ENCODE measurements at regions of chr11 and their contacts with region 1.

Region 1: DNA sequence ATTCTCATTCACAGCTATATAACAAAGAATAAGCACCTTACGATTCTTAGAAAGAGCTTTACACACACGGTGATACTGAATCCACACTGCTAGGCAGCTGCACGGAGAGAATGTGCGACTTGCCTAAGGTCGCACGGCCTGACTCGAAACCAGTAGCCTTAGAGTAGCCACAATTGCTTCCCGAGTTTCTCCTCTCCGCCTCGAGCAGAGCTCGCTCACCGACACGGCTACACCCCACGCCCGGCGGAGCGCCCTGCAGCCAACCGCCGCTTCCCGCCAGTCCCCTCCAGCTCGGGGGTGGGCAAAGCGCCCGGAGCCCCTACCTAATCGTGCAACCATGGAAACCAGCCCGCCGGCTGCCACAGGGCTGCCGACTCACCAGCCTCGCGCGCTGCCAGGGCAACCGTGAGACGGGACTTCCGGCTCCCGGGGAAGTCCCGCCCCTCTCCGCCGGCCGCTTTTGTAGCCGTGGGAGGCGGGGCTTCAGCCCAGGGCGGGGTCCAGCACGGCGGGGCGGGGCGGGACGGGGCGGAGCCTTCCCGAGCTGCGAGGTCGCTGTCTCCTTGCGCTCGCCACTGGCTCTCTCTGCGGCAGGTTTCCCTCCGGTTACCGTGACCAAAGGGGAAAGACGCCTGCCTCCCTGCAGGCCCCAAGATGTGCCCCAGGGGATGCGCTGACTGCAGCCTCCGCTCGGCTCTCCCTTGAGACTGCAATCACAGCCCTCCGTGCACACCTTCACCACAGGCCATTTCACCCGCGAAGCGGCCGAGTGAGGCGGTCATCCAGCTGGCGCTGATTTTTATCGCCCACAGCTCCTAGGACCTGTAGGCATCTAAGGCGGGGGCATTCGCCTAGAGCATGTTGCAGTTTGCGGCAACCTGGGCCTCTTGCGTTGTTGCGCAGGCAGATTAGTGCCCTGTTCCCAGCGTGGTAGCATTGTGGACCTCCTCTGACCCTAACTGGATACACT is 1.1 kb downstream of the BSCL2 start:
- DNase-seq: peak; percentile 94 to 98 (median 96)
- ATAC-seq: peak; percentile 65 to 90 (median 86)
- H3K4me3 ChIP-seq: peak overlapping the region; percentile 63 to 89 (median 78)
- H3K27ac ChIP-seq: peak overlapping the region; percentile 71 to 95 (median 88)
- H3K4me1 ChIP-seq: peaks cover 0 to 61% (median 34%) of the 10 kb centered on the region in 12 donors
- H3K27me3 ChIP-seq: no peaks in the 10 kb centered on the region
- CTCF ChIP-seq: no peak
- POLR2A ChIP-seq: peak in 1 of 2 donors; percentile 60

Region 2: GRCh38 chr11:62665075-62665598 is 41.0 kb before region 1 on chr11 and contains the starts of genes C11orf98 and CSKMT:
- intact Hi-C with region 1: loop called in 2 of 10 experiments (anchors 5 kb)
- DNase-seq: peak; percentile 95 to 97 (median 95)
- ATAC-seq: peak; percentile 97 to 98 (median 98)
- H3K4me3 ChIP-seq: peak within 1 kb of the TSS; percentile 53 to 92 (median 83)
- H3K27ac ChIP-seq: peak within 1 kb of the TSS; percentile 30 to 98 (median 90)
- H3K4me1 ChIP-seq: peaks cover 5 to 45% (median 32%) of the 10 kb centered on the region in 12 donors
- H3K27me3 ChIP-seq: no peaks in the 10 kb centered on the region
- CTCF ChIP-seq: no peak
- POLR2A ChIP-seq: peak; percentile 91 to 97
- total RNA-seq, gene C11orf98: 24.0 to 56.2 (median 28.5) TPM
- total RNA-seq, gene CSKMT: 0.38 to 8.7 (median 4.2) TPM

Region 3: DNA sequence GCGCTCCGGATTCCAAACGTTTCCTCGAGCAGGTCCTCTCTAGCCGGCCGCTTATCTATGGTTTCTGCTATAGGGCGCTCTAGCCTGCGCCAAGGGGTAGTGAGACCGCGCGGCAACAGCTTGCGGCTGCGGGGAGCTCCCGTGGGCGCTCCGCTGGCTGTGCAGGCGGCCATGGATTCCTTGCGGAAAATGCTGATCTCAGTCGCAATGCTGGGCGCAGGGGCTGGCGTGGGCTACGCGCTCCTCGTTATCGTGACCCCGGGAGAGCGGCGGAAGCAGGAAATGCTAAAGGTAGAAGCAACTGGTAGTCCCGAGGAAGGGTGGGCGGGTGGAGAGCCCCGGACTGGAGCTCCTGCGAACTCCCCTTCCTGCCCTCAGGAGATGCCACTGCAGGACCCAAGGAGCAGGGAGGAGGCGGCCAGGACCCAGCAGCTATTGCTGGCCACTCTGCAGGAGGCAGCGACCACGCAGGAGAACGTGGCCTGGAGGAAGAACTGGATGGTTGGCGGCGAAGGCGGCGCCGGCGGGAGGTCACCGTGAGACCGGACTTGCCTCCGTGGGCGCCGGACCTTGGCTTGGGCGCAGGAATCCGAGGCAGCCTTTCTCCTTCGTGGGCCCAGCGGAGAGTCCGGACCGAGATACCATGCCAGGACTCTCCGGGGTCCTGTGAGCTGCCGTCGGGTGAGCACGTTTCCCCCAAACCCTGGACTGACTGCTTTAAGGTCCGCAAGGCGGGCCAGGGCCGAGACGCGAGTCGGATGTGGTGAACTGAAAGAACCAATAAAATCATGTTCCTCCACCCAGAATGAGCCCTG is 34.4 kb before region 1 on chr11 and contains the starts of genes LBHD1 and UQCC3:
- intact Hi-C with region 1: loop called in 2 of 10 experiments (anchors 5 kb)
- DNase-seq: peak; percentile 77 to 85 (median 83)
- ATAC-seq: peak; percentile 78 to 91 (median 86)
- H3K4me3 ChIP-seq: peak within 1 kb of the TSS; percentile 68 to 93 (median 76)
- H3K27ac ChIP-seq: peak within 1 kb of the TSS; percentile 82 to 97 (median 88)
- H3K4me1 ChIP-seq: peaks cover 0 to 54% (median 33%) of the 10 kb centered on the region in 12 donors
- H3K27me3 ChIP-seq: no peaks in the 10 kb centered on the region
- CTCF ChIP-seq: no peak
- POLR2A ChIP-seq: peak in 1 of 2 donors; percentile 53
- total RNA-seq, gene LBHD1: 1.8 to 6.3 (median 2.9) TPM
- total RNA-seq, gene UQCC3: 5.3 to 8.8 (median 5.9) TPM

Region 4: DNA sequence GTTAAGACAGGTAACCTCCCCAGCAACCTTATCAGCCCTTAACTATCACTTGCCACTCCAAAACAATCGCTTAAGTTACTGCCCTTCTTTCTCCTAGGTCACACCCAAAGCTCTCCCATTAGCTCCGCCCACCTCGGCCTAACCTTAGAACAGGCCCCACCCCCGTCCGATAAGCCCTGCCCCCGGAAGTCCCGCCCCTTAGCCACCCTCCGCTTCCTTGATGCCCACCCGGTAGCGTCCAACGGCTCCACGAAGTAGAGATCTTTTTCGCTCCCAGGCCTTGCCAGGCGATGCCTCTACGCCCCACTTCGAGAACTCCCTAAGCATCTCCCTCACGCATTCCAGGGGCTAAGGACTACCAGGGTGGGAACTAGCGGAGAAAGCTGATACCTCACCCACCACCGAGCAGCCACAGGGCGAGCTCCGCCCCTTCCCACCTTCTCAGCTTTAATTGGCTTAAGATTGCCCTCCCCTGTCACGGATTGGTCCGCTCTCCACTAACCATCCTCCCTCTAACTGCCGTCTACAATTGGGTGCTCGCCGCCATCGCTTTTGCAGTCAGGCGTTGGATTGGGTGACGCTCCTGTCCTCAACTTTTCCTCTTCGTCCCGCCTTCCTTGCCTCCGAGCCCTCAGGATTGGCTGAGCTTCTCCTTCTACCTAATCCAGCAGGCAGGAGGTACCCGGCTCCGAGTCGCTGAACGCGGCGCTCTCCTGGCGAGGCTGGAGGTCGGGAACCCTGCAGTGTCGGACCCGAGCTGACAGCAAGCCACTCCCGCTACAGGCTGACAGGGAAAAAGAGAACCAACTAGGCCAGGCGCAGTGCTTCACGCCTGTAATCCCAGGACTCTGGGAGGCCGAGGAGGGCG is 47.8 kb after region 1 on chr11 and contains the start of gene ZBTB3:
- intact Hi-C with region 1: no loop called
- DNase-seq: peak; percentile 96 to 99 (median 99)
- ATAC-seq: peak; percentile 97 to 98 (median 98)
- H3K4me3 ChIP-seq: peak within 1 kb of the TSS; percentile 21 to 86 (median 71)
- H3K27ac ChIP-seq: peak within 1 kb of the TSS; percentile 85 to 97 (median 94)
- H3K4me1 ChIP-seq: peaks cover 3 to 43% (median 16%) of the 10 kb centered on the region in 12 donors
- H3K27me3 ChIP-seq: no peaks in the 10 kb centered on the region
- CTCF ChIP-seq: peak in 1 of 12 donors; percentile 13
- POLR2A ChIP-seq: peak in 1 of 2 donors; percentile 74
- total RNA-seq, gene ZBTB3: 6.9 to 16.6 (median 9.9) TPM

Measured in heart left ventricle (tissue), 16 donors.